ENCODE measurements at regions of chr3 and their contacts with region 1.

Region 1: GRCh38 chr3:50436114-50436674 is 67.2 kb downstream of the CACNA2D2 start:
- DNase-seq: peak; percentile 50
- ATAC-seq: peak; percentile 92
- H3K4me3 ChIP-seq: no peak overlapping the region
- H3K27ac ChIP-seq: no peak overlapping the region
- H3K4me1 ChIP-seq: no peaks in the 10 kb centered on the region
- H3K27me3 ChIP-seq: peaks cover 1 to 25% of the 10 kb centered on the region in 2 experiments; a peak in 4 of 5 replicates
- CTCF ChIP-seq: peak; percentile 97
- EP300 ChIP-seq: no peak
- POLR2A ChIP-seq: no peak
- RAD21 ChIP-seq: peak; percentile 94

Region 2: DNA sequence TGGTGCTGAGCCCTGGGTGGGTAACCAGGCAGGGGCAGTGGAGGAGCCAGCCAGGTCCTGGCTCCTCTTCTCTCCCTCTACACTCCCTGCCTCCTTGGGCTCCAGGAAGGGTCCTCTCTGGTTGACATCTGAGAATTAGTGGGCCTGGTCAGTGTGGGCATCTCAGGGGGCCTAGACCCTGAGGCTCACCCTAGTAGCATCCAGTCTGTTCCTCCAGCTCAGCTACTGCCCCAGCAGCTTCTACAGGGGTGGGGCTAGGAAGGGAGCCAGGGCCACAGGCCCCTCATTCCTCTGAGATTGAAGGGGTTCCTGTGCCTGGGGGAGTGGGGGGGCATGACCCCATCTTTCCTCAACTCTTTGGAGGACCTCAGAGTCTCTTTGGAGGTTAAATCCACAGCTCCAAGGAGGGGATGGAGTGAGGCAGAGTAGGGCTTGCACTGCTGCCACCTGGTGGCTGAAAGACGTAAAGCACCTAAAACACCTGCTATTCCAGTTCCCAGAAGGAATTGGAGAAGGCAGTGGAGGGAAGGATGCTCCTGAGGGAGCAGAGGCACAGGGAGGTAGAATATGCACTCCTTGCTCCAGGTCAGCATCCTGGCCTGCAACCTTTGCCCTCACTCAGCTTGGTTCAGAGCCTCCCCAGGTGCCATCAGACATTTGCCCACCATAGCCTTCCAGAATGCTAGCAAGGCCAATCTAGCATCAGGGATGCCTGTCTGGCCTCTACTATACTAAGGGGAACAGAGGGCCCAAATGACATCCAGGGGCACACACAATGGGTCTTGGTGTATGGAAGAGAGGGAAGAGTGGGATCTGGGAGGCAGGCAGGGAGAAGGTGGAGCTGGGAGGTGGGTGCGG is 106.2 kb after region 1 on chr3:
- CTCF ChIA-PET with region 1: interaction called, 32 read pairs
- POLR2A ChIA-PET with region 1: no interaction called
- in situ Hi-C with region 1: loop called (anchors 5 kb)
- intact Hi-C with region 1: loop called (anchors 1 kb)
- DNase-seq: peak; percentile 40
- ATAC-seq: peak; percentile 77
- H3K4me3 ChIP-seq: no peak overlapping the region
- H3K27ac ChIP-seq: no peak overlapping the region
- H3K4me1 ChIP-seq: no peaks in the 10 kb centered on the region
- H3K27me3 ChIP-seq: peaks cover 0 to 27% of the 10 kb centered on the region in 2 experiments; a peak in 3 of 5 replicates
- CTCF ChIP-seq: peak; percentile 90
- EP300 ChIP-seq: no peak
- POLR2A ChIP-seq: no peak
- RAD21 ChIP-seq: peak; percentile 63

Measured in HepG2 (cell line).